ENCODE measurements at regions of chr12 and their contacts with region 1.

Region 1: GRCh38 chr12:78028426-78028825 is 197.7 kb downstream of the NAV3 start:
- DNase-seq: no peak
- ATAC-seq: no peak
- H3K4me3 ChIP-seq: no peak overlapping the region
- H3K4me3 Mint-ChIP-seq: no peak overlapping the region
- H3K27ac ChIP-seq: no peak overlapping the region
- H3K27ac Mint-ChIP-seq: no peak overlapping the region
- H3K4me1 ChIP-seq: no peaks in the 10 kb centered on the region
- H3K4me1 Mint-ChIP-seq: no peaks in the 10 kb centered on the region
- H3K27me3 ChIP-seq: no peaks in the 10 kb centered on the region
- H3K27me3 Mint-ChIP-seq: no peaks in the 10 kb centered on the region
- CTCF ChIP-seq: no peak

Region 2: DNA sequence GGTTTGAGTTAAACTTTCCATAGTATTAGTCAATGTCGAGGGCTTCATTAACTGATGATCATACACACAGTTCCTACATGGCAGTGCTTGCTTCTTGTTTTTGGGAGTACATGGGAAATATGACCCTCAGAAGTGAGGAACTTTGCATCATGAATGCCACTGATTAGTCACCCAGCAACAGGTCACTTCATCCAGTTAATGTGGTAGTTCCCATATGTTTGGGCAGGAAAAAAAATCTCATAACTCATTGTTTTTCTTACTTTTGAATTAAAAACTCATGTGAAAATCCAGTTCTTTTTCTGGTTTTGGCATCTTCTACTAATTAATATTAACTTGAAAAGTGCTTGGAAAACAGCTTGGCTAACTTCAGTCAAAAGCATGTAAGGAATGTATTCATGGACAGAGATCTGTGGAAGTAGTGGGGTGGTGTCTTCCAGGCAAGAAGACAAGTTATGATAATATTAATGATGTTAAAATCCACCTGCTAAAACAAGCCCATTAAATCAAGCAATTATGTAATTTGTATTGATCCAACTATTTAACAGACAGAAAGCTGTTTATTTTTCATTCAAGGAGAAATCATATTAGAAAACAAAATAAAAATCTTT is 506.8 kb before region 1 on chr12:
- CTCF ChIA-PET with region 1: no interaction called
- POLR2A ChIA-PET with region 1: no interaction called
- intact Hi-C with region 1: no loop called
- DNase-seq: no peak
- ATAC-seq: no peak
- H3K4me3 ChIP-seq: no peak overlapping the region
- H3K4me3 Mint-ChIP-seq: no peak overlapping the region
- H3K27ac ChIP-seq: no peak overlapping the region
- H3K27ac Mint-ChIP-seq: no peak overlapping the region
- H3K4me1 ChIP-seq: no peaks in the 10 kb centered on the region
- H3K4me1 Mint-ChIP-seq: no peaks in the 10 kb centered on the region
- H3K27me3 ChIP-seq: no peaks in the 10 kb centered on the region
- H3K27me3 Mint-ChIP-seq: no peaks in the 10 kb centered on the region
- CTCF ChIP-seq: no peak

Region 3: DNA sequence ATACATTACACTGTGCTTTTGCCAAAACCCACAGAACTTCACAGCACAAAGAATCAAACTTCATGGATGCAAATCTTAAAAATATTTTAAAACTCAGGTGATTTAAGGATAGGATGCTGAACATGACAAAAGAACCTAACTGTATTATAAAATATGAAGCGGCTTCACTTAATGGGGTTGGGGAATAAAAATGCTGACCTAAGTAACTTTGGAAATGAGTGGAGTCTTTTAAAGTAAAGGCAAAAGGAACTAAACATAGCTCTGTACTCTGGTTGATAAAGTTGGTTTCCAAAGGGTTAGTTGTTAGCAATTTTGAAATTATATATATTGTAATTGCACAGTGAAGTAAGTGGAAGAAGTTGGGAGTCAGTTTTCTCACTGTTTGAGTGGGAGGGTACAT is 724.6 kb after region 1 on chr12:
- CTCF ChIA-PET with region 1: no interaction called
- POLR2A ChIA-PET with region 1: no interaction called
- intact Hi-C with region 1: loop called in 1 of 2 experiments (anchors 5 kb)
- DNase-seq: no peak
- ATAC-seq: no peak
- H3K4me3 ChIP-seq: no peak overlapping the region
- H3K4me3 Mint-ChIP-seq: no peak overlapping the region
- H3K27ac ChIP-seq: no peak overlapping the region
- H3K27ac Mint-ChIP-seq: no peak overlapping the region
- H3K4me1 ChIP-seq: no peaks in the 10 kb centered on the region
- H3K4me1 Mint-ChIP-seq: no peaks in the 10 kb centered on the region
- H3K27me3 ChIP-seq: no peaks in the 10 kb centered on the region
- H3K27me3 Mint-ChIP-seq: no peaks in the 10 kb centered on the region
- CTCF ChIP-seq: no peak